ENCODE measurements at regions of chr19 and their contacts with region 1.

Region 1: GRCh38 chr19:1896508-1896907 is 8.7 kb upstream of the ADAT3 start:
- DNase-seq: peak in 2 of 9 experiments; percentile 33 to 45
- ATAC-seq: no peak
- H3K4me3 ChIP-seq: peak overlapping the region in 1 of 2 experiments; percentile 15
- H3K4me3 Mint-ChIP-seq: peak overlapping the region; percentile 80
- H3K27ac ChIP-seq: peak overlapping the region in 1 of 2 experiments; percentile 68
- H3K27ac Mint-ChIP-seq: no peak overlapping the region
- H3K4me1 ChIP-seq: peaks cover 40% of the 10 kb centered on the region
- H3K4me1 Mint-ChIP-seq: peaks cover 30% of the 10 kb centered on the region
- H3K27me3 ChIP-seq: no peaks in the 10 kb centered on the region
- H3K27me3 Mint-ChIP-seq: no peaks in the 10 kb centered on the region
- CTCF ChIP-seq: no peak

Region 2: GRCh38 chr19:1794424-1795172 is 101.9 kb before region 1 on chr19:
- CTCF ChIA-PET with region 1: no interaction called
- POLR2A ChIA-PET with region 1: no interaction called
- intact Hi-C with region 1: no loop called
- DNase-seq: no peak
- ATAC-seq: no peak
- H3K4me3 ChIP-seq: no peak overlapping the region
- H3K4me3 Mint-ChIP-seq: no peak overlapping the region
- H3K27ac ChIP-seq: no peak overlapping the region
- H3K27ac Mint-ChIP-seq: no peak overlapping the region
- H3K4me1 ChIP-seq: peaks cover 5% of the 10 kb centered on the region
- H3K4me1 Mint-ChIP-seq: no peaks in the 10 kb centered on the region
- H3K27me3 ChIP-seq: peaks cover 0 to 11% of the 10 kb centered on the region in 2 experiments
- H3K27me3 Mint-ChIP-seq: peaks cover 9% of the 10 kb centered on the region
- CTCF ChIP-seq: no peak

Region 3: GRCh38 chr19:1875646-1876495 is 20.6 kb before region 1 on chr19:
- CTCF ChIA-PET with region 1: interaction called, 6 read pairs
- POLR2A ChIA-PET with region 1: interaction called, 16 read pairs
- intact Hi-C with region 1: no loop called
- DNase-seq: peak; percentile 70 to 93 (median 87)
- ATAC-seq: peak; percentile 84
- H3K4me3 ChIP-seq: peak overlapping the region; percentile 82 to 98
- H3K4me3 Mint-ChIP-seq: peak overlapping the region; percentile 99
- H3K27ac ChIP-seq: peak overlapping the region; percentile 90 to 95
- H3K27ac Mint-ChIP-seq: peak overlapping the region; percentile 98
- H3K4me1 ChIP-seq: peaks cover 43% of the 10 kb centered on the region
- H3K4me1 Mint-ChIP-seq: peaks cover 31% of the 10 kb centered on the region
- H3K27me3 ChIP-seq: no peaks in the 10 kb centered on the region
- H3K27me3 Mint-ChIP-seq: no peaks in the 10 kb centered on the region
- CTCF ChIP-seq: no peak

Region 4: DNA sequence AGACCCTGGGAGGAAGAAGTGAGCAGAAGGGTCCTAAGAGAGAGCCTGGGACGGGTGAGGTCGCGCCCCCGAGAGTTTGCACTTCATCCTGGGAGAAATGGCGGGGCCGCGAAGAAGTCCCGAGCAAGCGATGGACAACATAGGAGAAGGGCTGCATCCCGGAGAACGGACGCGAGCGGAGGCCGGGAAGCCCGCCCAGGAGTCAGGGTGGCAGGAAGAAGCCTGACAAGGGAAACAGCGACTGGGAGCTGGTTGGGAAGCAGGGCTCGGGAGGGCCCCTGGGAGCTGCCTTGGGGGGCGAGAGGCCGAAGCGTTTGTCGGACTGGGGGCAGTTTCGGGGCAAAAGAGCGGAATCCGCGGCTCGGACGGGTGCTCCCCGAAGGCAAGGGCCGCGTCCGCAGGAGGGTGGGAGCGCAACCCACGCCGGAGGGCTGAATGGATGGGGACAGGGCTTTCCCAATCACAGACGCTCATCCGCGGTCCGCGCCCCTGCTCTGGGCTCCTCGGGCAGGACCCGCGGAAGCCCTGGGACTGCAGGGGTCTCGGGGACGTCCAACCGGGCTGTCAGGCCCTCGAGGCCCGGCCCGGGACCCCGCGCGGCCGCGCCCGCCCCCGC is 11.7 kb before region 1 on chr19:
- CTCF ChIA-PET with region 1: interaction called, 4 read pairs
- POLR2A ChIA-PET with region 1: interaction called, 12 read pairs
- intact Hi-C with region 1: loop called in 1 of 2 experiments (anchors 1 kb)
- DNase-seq: peak in 3 of 9 experiments; percentile 41 to 51 (median 48)
- ATAC-seq: no peak
- H3K4me3 ChIP-seq: peak overlapping the region; percentile 77 to 100
- H3K4me3 Mint-ChIP-seq: peak overlapping the region; percentile 100
- H3K27ac ChIP-seq: peak overlapping the region; percentile 92
- H3K27ac Mint-ChIP-seq: peak overlapping the region; percentile 99
- H3K4me1 ChIP-seq: peaks cover 40% of the 10 kb centered on the region
- H3K4me1 Mint-ChIP-seq: peaks cover 38% of the 10 kb centered on the region
- H3K27me3 ChIP-seq: no peaks in the 10 kb centered on the region
- H3K27me3 Mint-ChIP-seq: no peaks in the 10 kb centered on the region
- CTCF ChIP-seq: no peak

Measured in CD8-positive, alpha-beta T cell (primary cell).